Esophagus muscularis mucosa (tissue), 4 donors: ENCODE measurements at regions of chr3 and their contacts with region 1.

Region 1: DNA sequence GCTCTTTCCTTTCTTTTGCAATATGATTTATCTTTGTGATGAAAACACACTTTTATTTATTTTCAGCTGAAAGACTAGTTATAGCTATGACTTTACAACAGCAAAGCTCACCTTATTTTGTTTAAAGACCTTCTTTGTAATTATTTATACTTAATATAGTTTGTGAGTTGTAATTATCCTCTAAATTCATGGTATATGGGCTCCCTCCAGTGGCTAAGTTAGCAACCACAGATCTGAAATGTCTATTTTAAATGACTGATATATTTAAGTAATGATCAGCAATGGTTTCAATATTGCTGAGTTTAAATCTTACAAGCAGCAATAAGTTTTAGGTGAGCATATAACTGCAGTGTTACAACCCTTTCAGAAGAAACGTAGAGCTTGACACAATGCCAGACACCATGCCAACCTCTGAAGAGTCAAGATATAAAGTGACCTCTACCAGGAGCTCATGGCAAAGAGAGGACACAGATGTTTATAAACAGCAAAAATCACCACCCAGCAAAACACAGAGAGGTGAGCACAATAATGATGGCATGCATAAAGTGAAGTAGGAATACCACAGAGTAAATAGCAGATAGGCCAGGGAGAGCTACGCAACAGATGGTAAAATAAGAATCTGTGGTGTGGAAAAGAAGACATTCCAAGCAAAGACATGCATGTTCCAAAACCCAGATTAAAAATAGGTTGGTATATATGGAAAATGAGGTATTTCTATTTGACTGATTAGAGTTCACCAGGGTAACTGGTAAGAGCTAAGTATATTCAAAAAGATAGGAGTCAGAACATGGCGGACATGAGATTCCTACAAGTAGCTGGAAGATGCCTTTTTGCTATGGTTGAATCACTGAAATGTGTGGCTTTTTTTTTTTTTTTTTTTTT is 143.7 kb upstream of the ZNF385D start:
- DNase-seq: no peak
- H3K4me3 ChIP-seq: no peak overlapping the region
- H3K27ac ChIP-seq: no peak overlapping the region
- H3K4me1 ChIP-seq: peaks cover 0 to 21% (median 14%) of the 10 kb centered on the region in 4 donors
- H3K27me3 ChIP-seq: no peaks in the 10 kb centered on the region
- CTCF ChIP-seq: peak; percentile 70 to 72 (median 71)
- EP300 ChIP-seq: no peak
- POLR2A ChIP-seq: no peak

Region 2: DNA sequence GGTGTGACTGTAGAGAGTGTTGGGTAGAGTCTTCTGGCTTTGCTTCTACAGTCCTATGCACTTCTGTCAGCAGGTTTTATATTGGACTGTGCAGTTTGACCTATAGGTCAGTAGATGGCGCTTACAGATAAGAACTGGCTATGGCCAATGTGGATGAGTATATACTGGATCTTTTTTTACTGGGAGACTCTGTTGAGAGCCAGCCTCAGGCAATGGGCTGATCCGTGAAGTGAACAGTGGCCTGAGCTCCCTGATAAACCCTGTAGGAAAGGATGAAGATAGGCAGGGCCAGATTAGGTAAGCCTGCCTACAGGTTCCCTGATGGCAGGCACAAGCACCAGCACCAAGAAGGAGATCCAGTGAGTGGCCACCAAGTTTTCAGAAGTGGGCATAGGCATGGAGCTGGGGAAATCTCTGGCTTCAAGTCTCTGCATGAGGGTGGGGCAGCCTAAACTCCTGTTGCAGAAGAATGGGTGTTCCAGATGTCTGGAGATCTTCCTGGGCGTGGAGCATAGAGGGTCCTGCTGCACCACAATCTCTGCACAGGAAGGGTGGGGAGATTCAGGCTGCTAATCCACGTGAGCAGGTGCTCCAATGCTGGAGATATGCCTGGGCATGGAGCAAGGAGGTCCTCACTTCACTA is 1382.7 kb before region 1 on chr3:
- intact Hi-C with region 1: loop called (anchors 10 kb)
- DNase-seq: no peak
- H3K4me3 ChIP-seq: no peak overlapping the region
- H3K27ac ChIP-seq: no peak overlapping the region
- H3K4me1 ChIP-seq: no peaks in the 10 kb centered on the region
- H3K27me3 ChIP-seq: no peaks in the 10 kb centered on the region
- CTCF ChIP-seq: peak; percentile 66 to 69 (median 66)
- EP300 ChIP-seq: no peak
- POLR2A ChIP-seq: no peak

Region 3: DNA sequence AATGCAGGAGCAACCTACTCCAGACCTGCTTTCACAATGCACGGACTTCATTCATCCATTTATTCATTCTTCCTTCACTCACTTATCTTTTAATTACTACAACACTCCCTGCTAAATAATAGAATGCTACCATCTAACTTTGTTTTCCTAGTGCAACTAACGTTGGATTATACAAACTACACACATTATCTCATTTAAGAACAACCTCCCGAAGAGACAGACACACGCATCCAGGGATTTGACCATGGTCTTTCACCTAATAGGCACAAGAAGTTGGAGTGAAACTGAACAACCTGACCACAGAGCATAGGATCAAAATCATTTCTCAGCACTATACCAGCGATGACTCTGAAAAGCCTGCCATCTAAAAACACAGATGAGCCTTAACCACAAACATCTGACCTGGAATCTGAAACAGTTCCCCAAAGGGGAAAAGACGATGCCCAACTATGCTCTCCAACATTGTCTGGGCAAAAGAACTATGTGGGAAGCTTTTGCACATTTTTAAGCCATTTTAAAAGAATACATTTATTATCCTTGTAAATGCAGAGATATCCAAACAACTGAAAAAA is 164.7 kb before region 1 on chr3:
- intact Hi-C with region 1: no loop called
- DNase-seq: no peak
- H3K4me3 ChIP-seq: no peak overlapping the region
- H3K27ac ChIP-seq: no peak overlapping the region
- H3K4me1 ChIP-seq: peaks cover 0 to 17% (median 5%) of the 10 kb centered on the region in 4 donors
- H3K27me3 ChIP-seq: no peaks in the 10 kb centered on the region
- CTCF ChIP-seq: no peak
- EP300 ChIP-seq: no peak
- POLR2A ChIP-seq: no peak

Region 4: DNA sequence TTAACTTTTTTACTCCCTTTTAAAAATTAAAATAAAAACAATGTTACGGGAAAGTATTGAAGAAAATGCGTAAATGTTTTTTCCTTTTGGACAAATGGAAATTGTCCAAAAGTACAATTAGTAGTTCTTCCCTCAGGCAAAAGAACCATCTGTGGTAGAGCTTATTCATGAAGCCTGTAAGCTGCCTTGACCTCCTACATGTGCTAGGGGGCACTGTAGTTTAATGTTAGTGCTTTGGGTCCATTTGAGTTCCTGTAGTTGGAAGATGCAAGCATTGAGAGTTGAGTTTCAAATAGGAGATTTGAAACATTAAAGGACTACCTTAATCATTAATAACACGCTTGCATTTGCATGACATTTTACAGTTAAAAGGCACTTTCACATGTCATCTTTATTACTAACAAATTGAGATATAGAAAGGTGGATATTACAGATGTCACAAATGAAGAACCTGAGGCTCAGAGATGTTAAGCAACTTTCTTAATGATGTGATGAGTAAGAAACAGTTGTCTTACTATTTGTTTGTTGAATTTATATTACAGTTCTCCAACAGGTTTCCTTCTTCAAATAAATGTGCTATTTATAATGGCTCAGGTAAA is 141.9 kb before region 1 on chr3:
- intact Hi-C with region 1: loop called (anchors 5 kb)
- DNase-seq: no peak
- H3K4me3 ChIP-seq: no peak overlapping the region
- H3K27ac ChIP-seq: peak overlapping the region in 1 of 4 donors; percentile 84
- H3K4me1 ChIP-seq: peaks cover 12 to 40% (median 33%) of the 10 kb centered on the region in 4 donors
- H3K27me3 ChIP-seq: no peaks in the 10 kb centered on the region
- CTCF ChIP-seq: peak; percentile 74 to 78 (median 74)
- EP300 ChIP-seq: no peak
- POLR2A ChIP-seq: no peak